ENCODE measurements at regions of chr17 and their contacts with region 1.

Region 1: GRCh38 chr17:48878918-48879898 is 13.4 kb upstream of the ATP5MC1 start:
- DNase-seq: no peak
- ATAC-seq: peak; percentile 77 to 91

Region 2: DNA sequence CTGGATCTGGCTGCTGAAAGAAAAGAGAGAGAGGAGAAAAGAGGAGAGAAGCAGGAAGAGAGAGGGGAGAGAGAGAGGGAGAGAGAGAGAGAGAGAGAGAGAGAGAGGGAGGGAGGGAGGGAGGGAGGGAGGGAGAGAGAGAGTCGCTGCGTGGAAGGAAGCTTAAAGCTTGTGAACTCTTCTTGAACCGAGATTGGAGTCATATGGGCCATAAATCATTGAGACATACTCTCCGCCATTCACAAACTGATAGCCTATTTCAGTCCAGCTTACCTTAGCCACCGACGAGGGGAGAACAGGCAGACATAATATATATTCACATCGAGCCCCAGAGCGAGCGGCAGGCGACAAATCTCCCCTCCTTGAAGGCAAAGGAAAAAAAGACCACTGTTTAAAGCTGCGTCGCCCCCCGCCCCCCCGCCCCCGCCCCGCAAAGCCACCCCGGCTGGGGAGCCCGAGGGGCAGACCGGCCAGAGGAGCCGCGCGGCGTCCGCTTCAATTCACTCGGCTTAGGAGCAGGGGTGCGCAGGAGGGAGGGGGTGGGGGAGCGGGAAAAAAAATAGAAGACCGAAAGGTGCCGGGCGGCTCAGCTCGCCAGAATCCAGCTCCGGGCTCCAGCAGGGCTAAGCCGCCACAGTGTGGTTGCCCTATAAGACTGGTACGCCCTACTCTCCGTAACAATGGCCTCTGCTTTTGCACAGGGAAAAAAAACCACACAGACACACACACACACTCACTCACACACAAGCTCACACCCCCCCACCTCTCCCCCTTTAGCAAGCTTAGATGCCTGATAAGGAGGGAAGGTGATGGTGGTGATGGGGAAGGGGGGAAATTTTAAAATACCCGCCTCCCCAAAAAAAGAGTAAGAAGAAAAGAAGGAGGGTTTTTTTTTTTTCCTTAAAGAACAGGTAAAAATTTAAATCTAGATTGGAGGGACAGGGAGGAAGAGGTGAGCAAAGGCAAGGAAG is 323.7 kb before region 1 on chr17:
- intact Hi-C with region 1: no loop called
- DNase-seq: no peak
- ATAC-seq: peak; percentile 53 to 76

Region 3: DNA sequence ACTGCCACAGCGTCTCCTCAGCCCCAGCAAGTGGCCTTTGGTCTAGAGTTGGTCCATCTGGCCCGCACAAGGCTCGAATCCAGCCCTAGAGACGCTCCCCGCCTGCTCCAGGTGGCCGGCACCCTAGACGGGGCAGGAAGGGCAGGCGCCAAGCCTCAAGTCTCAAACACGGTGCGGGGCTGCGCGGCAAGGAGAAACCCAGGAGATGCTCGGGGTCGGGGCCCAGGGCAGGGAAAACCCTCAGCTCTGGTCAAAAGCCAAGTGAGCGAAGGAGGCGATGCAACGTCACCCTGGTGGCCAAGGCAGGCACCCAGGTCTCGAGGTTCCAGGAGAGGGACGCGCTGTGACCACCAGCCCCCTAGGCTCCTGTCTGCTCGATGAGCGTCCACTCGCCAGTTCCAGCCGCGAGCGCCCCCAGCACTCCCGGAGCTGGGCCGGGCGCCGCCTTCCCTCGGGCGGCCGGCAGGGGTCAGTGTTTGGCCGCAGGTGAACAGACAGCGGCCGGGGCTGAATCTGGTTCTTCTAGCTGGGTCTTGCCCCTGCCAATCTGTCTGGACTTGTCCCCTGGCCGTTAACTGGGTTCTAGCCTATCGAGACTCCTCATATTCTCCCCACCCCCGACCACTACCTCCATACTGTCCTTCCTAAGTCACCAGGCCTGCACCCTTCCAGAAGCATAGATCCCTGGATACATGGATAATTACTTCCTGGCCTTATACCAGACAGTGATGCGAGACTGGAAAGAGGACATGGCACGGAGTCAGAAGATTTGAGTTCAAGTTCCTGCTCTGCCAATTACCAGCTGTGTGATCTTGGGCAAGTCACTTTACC is 200.9 kb before region 1 on chr17:
- intact Hi-C with region 1: loop called (anchors 2 to 10 kb)
- DNase-seq: peak; percentile 57
- ATAC-seq: peak; percentile 78 to 84

Region 4: GRCh38 chr17:48724251-48725003 is 154.8 kb before region 1 on chr17:
- intact Hi-C with region 1: loop called (anchors 5 to 10 kb)
- DNase-seq: peak; percentile 90
- ATAC-seq: peak; percentile 86 to 90

Region 5: GRCh38 chr17:48804925-48805411 is 74.2 kb before region 1 on chr17:
- intact Hi-C with region 1: loop called (anchors 2 kb)
- DNase-seq: peak; percentile 56
- ATAC-seq: peak; percentile 82 to 90

Region 6: GRCh38 chr17:48814504-48814903 is 64.7 kb before region 1 on chr17:
- intact Hi-C with region 1: loop called in 1 of 2 experiments (anchors 2 kb)
- DNase-seq: peak; percentile 55
- ATAC-seq: peak in 1 of 2 donors; percentile 13

Region 7: GRCh38 chr17:49031965-49032928 is 153.0 kb after region 1 on chr17:
- intact Hi-C with region 1: loop called in 1 of 2 experiments (anchors 5 kb)
- DNase-seq: no peak
- ATAC-seq: peak; percentile 76 to 85

Region 8: GRCh38 chr17:49707608-49708514 is 828.7 kb after region 1 on chr17 and contains the start of gene SLC35B1:
- intact Hi-C with region 1: no loop called
- DNase-seq: peak; percentile 99
- ATAC-seq: peak; percentile 99 to 100
- total RNA-seq, gene SLC35B1: 48.8 to 78.8 TPM